ENCODE measurements at regions of chr15 and their contacts with region 1.

Region 1: DNA sequence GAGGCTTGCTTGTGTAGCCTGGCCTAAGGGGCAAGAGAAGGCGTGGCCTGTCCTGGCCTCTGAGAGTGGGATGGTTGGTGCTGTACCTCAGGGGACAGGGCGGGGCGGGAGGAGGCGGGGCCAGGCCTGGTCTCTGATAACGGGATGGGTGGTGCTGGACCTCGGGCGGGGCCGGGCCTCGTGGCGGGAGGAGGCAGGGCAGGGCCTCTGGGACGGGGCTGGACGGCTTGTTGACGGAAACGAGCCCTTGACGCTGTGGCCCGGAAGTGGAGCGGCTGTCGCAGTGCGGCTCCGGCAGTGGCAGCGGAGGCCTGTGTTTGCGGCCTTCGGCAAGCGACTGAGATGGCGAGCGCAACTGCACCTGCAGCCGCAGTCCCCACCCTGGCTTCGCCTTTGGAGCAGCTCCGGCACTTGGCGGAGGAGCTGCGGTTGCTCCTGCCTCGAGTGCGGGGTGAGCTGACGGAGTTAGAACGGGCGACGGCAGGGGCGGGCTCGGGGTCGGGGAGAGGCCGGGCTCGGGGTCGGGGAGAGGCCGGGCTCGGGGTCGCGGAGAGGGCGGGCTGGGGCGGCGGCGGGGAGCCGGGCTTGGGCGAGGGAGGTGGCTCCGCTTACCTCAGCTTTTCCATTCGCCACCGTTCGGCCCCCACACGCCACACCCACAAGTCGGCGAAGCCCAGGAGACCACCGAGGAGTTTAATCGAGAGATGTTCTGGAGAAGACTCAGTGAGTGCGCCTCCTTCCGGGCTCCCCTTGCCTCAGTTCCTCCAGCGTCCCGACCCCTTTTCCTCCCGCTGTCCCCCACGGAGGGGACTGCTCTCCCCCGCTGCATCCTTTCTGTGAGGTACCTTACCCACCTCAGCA is at the start of gene CCNDBP1:
- DNase-seq: peak; percentile 99
- H3K4me3 ChIP-seq: peak within 1 kb of the TSS; percentile 59
- H3K27ac ChIP-seq: peak within 1 kb of the TSS; percentile 84
- H3K4me1 ChIP-seq: no peaks in the 10 kb centered on the region
- H3K27me3 ChIP-seq: no peaks in the 10 kb centered on the region
- CTCF ChIP-seq: no peak
- total RNA-seq, gene CCNDBP1: 48.2 to 64.5 TPM

Region 2: GRCh38 chr15:43105778-43106485 is 79.5 kb before region 1 on chr15 and contains the start of gene UBR1:
- intact Hi-C with region 1: loop called (anchors 10 kb)
- DNase-seq: peak; percentile 89
- H3K4me3 ChIP-seq: peak within 1 kb of the TSS; percentile 75
- H3K27ac ChIP-seq: peak within 1 kb of the TSS; percentile 89
- H3K4me1 ChIP-seq: peaks cover 10% of the 10 kb centered on the region
- H3K27me3 ChIP-seq: no peaks in the 10 kb centered on the region
- CTCF ChIP-seq: no peak
- total RNA-seq, gene UBR1: 21.4 to 26.2 TPM